Mammary epithelial cell (primary cell): ENCODE measurements at regions of chr6 and their contacts with region 1.

Region 1: DNA sequence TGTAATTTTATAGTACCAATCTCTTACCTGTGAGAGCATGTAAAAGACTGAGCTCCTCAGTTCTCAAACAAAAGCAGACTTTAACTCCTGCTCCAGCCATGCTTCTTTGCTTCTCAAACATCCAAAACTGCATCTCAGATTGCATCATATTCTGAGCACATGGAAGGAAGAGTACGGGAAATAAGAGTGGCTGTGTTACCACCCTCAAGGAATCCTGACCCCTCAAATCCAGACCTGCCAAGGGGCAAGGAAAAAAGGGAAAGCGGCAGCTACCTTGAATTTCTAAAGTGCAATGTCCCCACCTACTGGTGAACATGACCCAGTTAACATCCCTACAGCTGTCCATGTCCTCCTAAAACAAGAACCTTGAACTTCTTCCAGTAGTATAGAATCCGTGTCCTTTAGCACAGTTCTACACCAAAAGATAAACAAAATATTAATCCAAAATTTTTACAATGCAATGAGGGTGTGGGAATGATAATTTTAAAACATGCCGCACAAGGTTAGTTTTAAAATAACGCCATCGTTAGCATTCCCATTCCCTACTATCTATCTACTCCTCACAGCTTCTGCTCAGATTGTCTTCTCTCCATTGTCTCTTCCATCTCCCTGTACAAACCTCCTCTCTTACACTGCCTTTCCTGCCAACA is 34.1 kb upstream of the HLA-DQB1 start:
- DNase-seq: peak; percentile 52
- H3K4me3 ChIP-seq: no peak overlapping the region
- H3K27ac ChIP-seq: no peak overlapping the region
- H3K4me1 ChIP-seq: no peaks in the 10 kb centered on the region
- H3K27me3 ChIP-seq: peaks cover 2% of the 10 kb centered on the region
- CTCF ChIP-seq: peak; percentile 66 to 77

Region 2: DNA sequence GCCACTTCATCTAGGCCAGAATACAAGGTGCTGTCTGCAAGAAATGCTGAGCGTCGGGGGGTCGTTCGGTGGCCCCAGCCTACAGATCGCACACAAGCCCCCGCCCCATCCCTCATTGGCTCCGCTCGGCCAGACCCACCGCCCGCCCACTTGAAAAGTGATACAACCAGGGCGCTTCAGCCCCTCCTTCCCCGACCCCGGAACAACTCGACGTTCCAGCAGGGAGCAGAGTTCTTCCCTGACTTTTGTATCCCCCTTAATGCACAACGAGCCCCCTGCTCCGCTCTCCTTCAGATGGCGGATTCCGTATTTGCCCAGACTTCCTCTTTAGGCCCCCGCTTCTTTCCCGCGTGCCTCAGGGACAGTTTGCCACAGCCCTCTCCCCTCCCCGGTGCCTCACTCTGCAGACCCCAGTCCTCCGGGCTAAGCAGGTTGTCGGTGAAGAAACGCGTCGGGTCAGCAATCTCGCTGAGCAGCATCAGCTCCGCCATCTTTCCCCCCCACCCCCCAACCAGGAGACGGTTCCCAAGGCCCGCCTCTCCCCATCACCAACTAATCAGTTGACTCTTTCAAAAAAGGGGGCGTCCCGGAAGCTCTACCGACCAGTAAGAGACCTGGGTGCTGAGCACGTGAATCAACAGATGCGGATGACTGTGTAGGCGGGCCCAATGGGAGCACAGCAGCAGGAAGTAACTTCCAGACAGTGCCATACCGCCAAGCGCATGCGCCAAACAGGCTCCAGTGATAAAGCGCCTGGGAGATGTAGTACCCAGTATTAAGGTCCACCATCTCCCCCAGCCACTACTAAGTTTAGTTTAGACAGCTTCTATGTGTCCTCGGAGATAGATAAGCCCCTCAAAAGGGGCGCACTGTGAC is 572.6 kb before region 1 on chr6 and contains the start of gene ATF6B:
- CTCF ChIA-PET with region 1: no interaction called
- dilution Hi-C with region 1: no loop called
- in situ Hi-C with region 1: no loop called
- intact Hi-C with region 1: loop called (anchors 10 kb)
- DNase-seq: peak; percentile 99
- H3K4me3 ChIP-seq: peak within 1 kb of the TSS; percentile 80 to 99 (median 82)
- H3K27ac ChIP-seq: peak within 1 kb of the TSS; percentile 70
- H3K4me1 ChIP-seq: peaks cover 18% of the 10 kb centered on the region
- H3K27me3 ChIP-seq: no peaks in the 10 kb centered on the region
- CTCF ChIP-seq: no peak
- total RNA-seq, gene ATF6B: 20.3 to 69.0 TPM

Region 3: DNA sequence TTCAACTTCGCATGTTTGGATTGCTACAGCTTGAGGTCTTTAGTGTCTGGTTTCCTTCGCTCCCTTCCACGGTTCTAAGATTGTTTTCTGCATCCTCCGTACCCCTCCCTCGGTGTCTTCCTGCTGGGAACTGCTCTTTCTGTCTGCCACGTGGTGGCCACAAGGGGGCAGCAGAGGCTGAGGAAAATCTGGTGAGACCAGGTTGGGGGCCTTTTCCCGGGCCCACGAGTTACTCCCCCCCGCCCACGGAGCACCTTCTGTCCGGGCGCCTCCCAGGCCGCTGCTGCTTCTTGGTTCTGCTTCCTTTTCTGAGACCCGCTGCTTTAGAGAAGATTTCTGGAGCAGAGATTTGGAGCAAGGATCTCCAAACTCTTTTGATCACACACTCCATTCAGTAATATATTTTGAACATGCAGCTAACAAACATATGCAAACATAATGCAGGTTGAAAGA is 455.5 kb before region 1 on chr6:
- CTCF ChIA-PET with region 1: interaction called, 3 read pairs
- dilution Hi-C with region 1: no loop called
- in situ Hi-C with region 1: no loop called
- intact Hi-C with region 1: loop called (anchors 1 kb)
- DNase-seq: peak; percentile 33
- H3K4me3 ChIP-seq: no peak overlapping the region
- H3K27ac ChIP-seq: no peak overlapping the region
- H3K4me1 ChIP-seq: no peaks in the 10 kb centered on the region
- H3K27me3 ChIP-seq: no peaks in the 10 kb centered on the region
- CTCF ChIP-seq: peak; percentile 77 to 88

Region 4: GRCh38 chr6:32432050-32432450 is 268.5 kb before region 1 on chr6:
- CTCF ChIA-PET with region 1: no interaction called
- dilution Hi-C with region 1: no loop called
- in situ Hi-C with region 1: no loop called
- intact Hi-C with region 1: loop called (anchors 1 kb)
- DNase-seq: no peak
- H3K4me3 ChIP-seq: no peak overlapping the region
- H3K27ac ChIP-seq: no peak overlapping the region
- H3K4me1 ChIP-seq: no peaks in the 10 kb centered on the region
- H3K27me3 ChIP-seq: peaks cover 2% of the 10 kb centered on the region
- CTCF ChIP-seq: peak; percentile 19 to 45

Region 5: DNA sequence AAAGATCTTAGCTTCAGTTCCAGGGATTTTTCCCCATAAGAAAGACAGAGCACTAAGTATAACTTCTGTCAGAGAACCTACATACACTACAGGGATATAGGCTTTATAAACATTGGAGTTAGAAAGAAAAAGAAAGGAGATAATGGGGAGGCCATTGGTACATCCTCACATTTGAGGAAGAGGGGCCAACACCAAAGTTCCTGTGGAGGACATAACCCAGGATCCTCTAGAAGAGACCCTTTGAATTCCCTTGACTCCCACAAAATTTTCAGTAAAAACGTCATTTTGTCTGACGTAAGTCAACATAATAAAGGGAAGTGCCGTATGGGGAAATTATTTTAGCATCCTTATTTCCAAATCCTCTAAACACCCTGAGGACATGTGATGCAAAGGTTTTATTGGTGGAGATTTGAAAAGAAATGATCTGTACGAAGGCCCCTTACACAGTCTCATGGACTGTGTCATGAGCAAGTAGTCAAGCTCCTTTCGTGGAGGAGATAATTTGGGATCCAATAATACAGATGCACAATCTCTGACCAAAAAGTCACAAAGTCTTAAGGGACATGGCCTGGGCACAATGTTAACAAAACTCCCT is 227.6 kb before region 1 on chr6:
- CTCF ChIA-PET with region 1: no interaction called
- dilution Hi-C with region 1: no loop called
- in situ Hi-C with region 1: no loop called
- intact Hi-C with region 1: no loop called
- DNase-seq: no peak
- H3K4me3 ChIP-seq: no peak overlapping the region
- H3K27ac ChIP-seq: no peak overlapping the region
- H3K4me1 ChIP-seq: no peaks in the 10 kb centered on the region
- H3K27me3 ChIP-seq: no peaks in the 10 kb centered on the region
- CTCF ChIP-seq: no peak

Region 6: GRCh38 chr6:32785781-32786533 is 85.4 kb after region 1 on chr6:
- CTCF ChIA-PET with region 1: interaction called, 8 read pairs
- dilution Hi-C with region 1: no loop called
- in situ Hi-C with region 1: no loop called
- intact Hi-C with region 1: loop called (anchors 1 kb)
- DNase-seq: peak; percentile 57
- H3K4me3 ChIP-seq: no peak overlapping the region
- H3K27ac ChIP-seq: no peak overlapping the region
- H3K4me1 ChIP-seq: peaks cover 7% of the 10 kb centered on the region
- H3K27me3 ChIP-seq: no peaks in the 10 kb centered on the region
- CTCF ChIP-seq: peak; percentile 61 to 73

Region 7: DNA sequence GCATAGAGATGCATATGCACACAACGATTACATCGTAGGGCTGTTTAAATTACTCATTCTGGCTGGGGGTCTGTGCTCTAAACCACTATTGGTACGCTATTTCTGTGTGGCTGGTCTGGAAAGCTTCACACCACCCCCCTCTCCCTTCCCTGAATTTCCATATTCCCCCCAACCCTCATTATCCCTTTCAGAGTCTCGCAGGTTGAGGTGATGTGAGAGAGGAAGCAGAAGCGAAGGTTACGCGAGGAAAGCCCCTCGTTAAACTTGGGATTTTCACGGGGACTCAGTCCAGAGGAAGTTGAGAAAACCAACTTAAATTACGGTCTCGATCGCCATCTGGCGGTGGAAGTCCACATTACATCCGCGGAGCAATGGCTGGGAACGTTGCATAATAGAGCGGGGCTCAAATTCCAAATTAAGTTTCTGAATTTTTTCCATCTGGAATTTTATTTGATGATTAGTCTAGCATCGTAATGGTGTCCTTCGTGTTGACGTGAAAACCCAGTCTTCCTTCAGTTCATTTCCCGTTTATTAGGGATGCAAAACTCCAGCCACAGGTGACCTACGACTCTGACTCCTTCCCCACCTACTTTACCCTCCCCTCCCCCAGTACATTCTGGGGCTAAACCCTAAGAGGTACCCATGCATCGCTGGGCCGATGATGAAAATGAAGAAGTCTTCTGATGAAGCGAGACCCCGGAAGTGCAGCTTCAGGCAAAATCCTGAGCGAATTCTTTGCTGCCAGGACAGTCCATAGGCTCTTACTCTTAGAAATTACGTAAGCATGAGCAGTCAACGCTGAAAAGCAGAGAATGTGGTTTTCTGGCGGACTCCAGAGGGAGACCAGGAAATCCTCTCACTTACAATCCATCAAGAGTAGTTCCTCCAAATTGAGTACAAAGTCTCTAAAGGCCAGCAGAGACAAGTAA is 96.6 kb after region 1 on chr6:
- CTCF ChIA-PET with region 1: no interaction called
- dilution Hi-C with region 1: no loop called
- in situ Hi-C with region 1: loop called in 1 of 2 experiments (anchors 5 kb)
- intact Hi-C with region 1: no loop called
- DNase-seq: peak; percentile 54
- H3K4me3 ChIP-seq: peak overlapping the region in 2 of 3 experiments; percentile 19 to 30
- H3K27ac ChIP-seq: no peak overlapping the region
- H3K4me1 ChIP-seq: peaks cover 13% of the 10 kb centered on the region
- H3K27me3 ChIP-seq: no peaks in the 10 kb centered on the region
- CTCF ChIP-seq: peak; percentile 67 to 82

Region 8: GRCh38 chr6:32868257-32868788 is 167.8 kb after region 1 on chr6:
- CTCF ChIA-PET with region 1: no interaction called
- dilution Hi-C with region 1: no loop called
- in situ Hi-C with region 1: no loop called
- intact Hi-C with region 1: loop called (anchors 5 kb)
- DNase-seq: peak; percentile 54
- H3K4me3 ChIP-seq: no peak overlapping the region
- H3K27ac ChIP-seq: no peak overlapping the region
- H3K4me1 ChIP-seq: no peaks in the 10 kb centered on the region
- H3K27me3 ChIP-seq: peaks cover 2% of the 10 kb centered on the region
- CTCF ChIP-seq: peak; percentile 71 to 83